H1 (cell line): ENCODE measurements at regions of chr2 and their contacts with region 1.

Region 1: GRCh38 chr2:190137561-190137960 is 75.0 kb upstream of the MSTN start:
- DNase-seq: no peak
- H3K4me3 ChIP-seq: no peak overlapping the region
- H3K27ac ChIP-seq: no peak overlapping the region
- H3K4me1 ChIP-seq: no peaks in the 10 kb centered on the region
- H3K27me3 ChIP-seq: no peaks in the 10 kb centered on the region
- CTCF ChIP-seq: no peak
- EP300 ChIP-seq: no peak
- POLR2A ChIP-seq: no peak
- RAD21 ChIP-seq: no peak

Region 2: DNA sequence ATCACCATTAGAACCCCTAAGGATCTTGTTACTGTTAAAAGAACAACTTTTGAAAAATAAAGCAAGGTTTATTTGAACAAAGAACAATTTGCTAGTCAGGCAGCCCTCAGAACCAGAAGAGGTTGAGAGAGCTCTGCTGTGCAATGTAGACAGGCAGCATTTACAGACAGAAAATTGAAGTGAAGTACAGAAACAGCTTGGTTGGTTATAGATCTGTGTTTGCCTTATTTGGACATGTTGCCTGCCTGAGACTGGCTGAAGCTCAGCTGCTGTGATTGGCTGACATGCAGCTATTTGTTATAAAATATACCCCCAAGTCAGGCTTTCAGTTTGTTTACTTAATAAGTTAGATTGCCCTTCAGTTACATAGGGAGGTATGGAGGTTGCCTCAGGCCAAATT is 87.6 kb before region 1 on chr2:
- CTCF ChIA-PET with region 1: no interaction called
- POLR2A ChIA-PET with region 1: no interaction called
- DNase-seq: no peak
- H3K4me3 ChIP-seq: no peak overlapping the region
- H3K27ac ChIP-seq: no peak overlapping the region
- H3K4me1 ChIP-seq: no peaks in the 10 kb centered on the region
- H3K27me3 ChIP-seq: no peaks in the 10 kb centered on the region
- CTCF ChIP-seq: no peak
- EP300 ChIP-seq: no peak
- POLR2A ChIP-seq: no peak
- RAD21 ChIP-seq: no peak

Region 3: DNA sequence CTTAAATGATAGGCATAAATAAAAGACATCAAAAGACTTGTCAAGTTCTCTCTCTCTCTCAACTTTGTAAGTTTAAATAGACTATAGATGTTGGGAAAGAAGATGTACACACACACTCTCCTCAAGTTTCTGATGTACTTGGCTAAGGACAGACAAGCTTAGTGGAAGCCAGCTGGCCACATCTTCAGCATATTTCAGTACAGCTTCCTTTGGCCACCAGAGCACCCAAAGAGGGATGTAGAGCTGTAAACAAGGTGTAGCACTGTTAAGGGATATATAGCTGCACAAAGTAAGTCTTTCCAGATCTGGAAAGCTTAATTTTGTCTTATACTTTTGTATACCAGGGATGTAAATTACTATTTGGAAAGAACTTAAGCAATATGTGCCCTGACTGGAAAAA is 10.8 kb before region 1 on chr2:
- CTCF ChIA-PET with region 1: interaction called, 19 read pairs
- POLR2A ChIA-PET with region 1: no interaction called
- DNase-seq: no peak
- H3K4me3 ChIP-seq: no peak overlapping the region
- H3K27ac ChIP-seq: no peak overlapping the region
- H3K4me1 ChIP-seq: no peaks in the 10 kb centered on the region; a peak in 1 of 7 replicates
- H3K27me3 ChIP-seq: no peaks in the 10 kb centered on the region
- CTCF ChIP-seq: no peak
- EP300 ChIP-seq: no peak
- POLR2A ChIP-seq: no peak
- RAD21 ChIP-seq: no peak